Transverse colon (tissue), 4 donors: ENCODE measurements at regions of chr6 and their contacts with region 1.

Region 1: GRCh38 chr6:46626228-46626909 is 26.2 kb downstream of the CYP39A1 start:
- DNase-seq: no peak
- H3K4me3 ChIP-seq: no peak overlapping the region
- H3K27ac ChIP-seq: no peak overlapping the region
- H3K4me1 ChIP-seq: peaks cover 0 to 6% (median 2%) of the 10 kb centered on the region in 4 donors
- H3K27me3 ChIP-seq: no peaks in the 10 kb centered on the region
- CTCF ChIP-seq: peak; percentile 52 to 66 (median 60)
- EP300 ChIP-seq: no peak
- POLR2A ChIP-seq: no peak

Region 2: DNA sequence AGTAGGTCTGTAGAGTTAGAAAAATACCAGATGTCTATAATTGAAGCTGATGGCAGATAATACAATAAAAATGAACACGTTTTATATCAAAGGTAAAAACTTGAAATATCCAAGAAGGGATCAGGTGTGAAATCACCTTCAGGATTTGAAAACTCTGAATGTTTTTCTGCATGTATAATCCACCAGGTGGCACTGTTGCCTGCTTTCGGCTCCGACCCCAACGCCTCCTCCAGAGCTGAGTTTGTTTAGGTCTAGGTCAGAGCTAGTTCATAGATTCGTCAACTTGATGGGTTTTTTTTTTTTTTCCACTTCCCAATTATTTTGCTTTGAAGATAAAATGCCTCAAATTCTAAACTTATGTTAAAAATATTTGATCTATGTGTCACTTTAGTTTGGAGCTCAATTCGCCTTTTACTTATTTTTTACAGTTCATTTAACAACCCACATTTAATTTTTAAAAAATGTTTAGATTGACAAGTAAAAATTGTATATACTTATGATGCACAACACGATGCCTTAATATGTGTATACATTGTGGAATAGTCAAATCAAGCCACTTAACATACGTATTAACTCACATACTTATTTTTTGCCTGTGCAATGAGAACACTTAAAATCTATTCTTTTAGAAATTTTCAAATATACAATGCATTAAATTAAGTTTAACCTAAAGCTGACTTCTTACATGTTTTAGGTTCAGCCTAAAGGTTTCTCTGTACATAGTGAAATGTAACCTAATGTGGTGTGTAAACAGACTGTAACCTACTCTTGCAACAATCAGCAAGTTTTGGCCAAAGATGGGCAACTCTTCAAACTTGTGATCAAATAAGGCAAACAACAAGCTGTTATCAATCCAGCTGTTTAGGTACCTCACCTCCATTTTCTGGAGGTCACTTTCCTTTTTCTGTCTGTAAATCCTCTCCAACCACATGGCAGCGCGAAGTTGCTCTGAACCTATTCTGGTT is 536.0 kb before region 1 on chr6:
- in situ Hi-C with region 1: loop called in 2 of 4 experiments (anchors 25 kb)
- intact Hi-C with region 1: no loop called
- DNase-seq: peak; percentile 66
- H3K4me3 ChIP-seq: no peak overlapping the region
- H3K27ac ChIP-seq: no peak overlapping the region
- H3K4me1 ChIP-seq: no peaks in the 10 kb centered on the region
- H3K27me3 ChIP-seq: no peaks in the 10 kb centered on the region
- CTCF ChIP-seq: peak; percentile 74 to 83 (median 79)
- EP300 ChIP-seq: no peak
- POLR2A ChIP-seq: no peak

Region 3: DNA sequence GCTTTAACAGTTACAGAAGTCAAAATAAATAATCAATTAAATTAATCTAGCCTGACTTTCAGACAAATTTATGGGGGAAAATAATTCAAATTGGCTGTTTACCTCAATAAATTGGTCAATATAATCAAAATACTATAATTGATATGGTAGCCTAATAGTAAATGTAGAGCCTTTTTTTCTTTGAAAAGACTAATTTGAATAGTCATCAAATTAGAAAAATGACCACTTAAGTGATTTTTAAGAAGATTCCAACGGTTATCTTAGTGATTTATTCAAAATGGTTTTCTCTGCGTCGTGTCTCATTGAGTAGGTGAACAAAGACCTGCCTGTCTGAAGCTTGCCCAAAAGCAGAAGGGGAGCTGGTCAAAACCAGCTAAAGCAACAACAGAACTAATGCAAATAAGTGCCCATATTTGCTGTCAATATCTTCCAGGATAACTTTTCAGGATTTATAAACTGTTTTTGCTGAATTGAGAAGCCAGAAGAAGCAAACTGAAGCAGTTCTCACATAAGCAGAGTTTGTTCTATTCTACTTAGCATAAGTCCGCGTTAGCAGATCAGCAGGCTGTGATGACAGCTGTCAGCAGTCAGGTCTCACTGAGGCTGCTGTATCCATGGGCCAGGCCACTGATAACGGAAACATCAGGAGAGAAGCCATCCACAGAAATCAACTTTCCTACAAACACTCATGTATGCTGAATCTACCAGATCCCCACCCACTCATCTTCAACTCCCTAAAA is 142.1 kb before region 1 on chr6:
- in situ Hi-C with region 1: no loop called
- intact Hi-C with region 1: no loop called
- DNase-seq: no peak
- H3K4me3 ChIP-seq: no peak overlapping the region
- H3K27ac ChIP-seq: no peak overlapping the region
- H3K4me1 ChIP-seq: no peaks in the 10 kb centered on the region
- H3K27me3 ChIP-seq: peaks cover 11% of the 10 kb centered on the region
- CTCF ChIP-seq: no peak
- EP300 ChIP-seq: no peak
- POLR2A ChIP-seq: no peak